Endothelial cell of umbilical vein (primary cell): ENCODE measurements at regions of chr6 and their contacts with region 1.

Region 1: GRCh38 chr6:45930420-45931040 is 85.1 kb downstream of the CLIC5 start:
- DNase-seq: peak; percentile 67
- H3K4me3 ChIP-seq: no peak overlapping the region
- H3K27ac ChIP-seq: no peak overlapping the region
- H3K4me1 ChIP-seq: no peaks in the 10 kb centered on the region
- H3K27me3 ChIP-seq: peaks cover 0 to 3% of the 10 kb centered on the region in 2 experiments
- CTCF ChIP-seq: peak; percentile 92 to 94
- POLR2A ChIP-seq: no peak

Region 2: GRCh38 chr6:45915780-45916468 is 14.6 kb before region 1 on chr6:
- CTCF ChIA-PET with region 1: interaction called, 19 read pairs
- POLR2A ChIA-PET with region 1: no interaction called
- dilution Hi-C with region 1: no loop called
- intact Hi-C with region 1: no loop called
- DNase-seq: no peak
- H3K4me3 ChIP-seq: no peak overlapping the region
- H3K27ac ChIP-seq: no peak overlapping the region
- H3K4me1 ChIP-seq: no peaks in the 10 kb centered on the region
- H3K27me3 ChIP-seq: no peaks in the 10 kb centered on the region
- CTCF ChIP-seq: no peak
- POLR2A ChIP-seq: no peak

Region 3: GRCh38 chr6:46035028-46035650 is 104.6 kb after region 1 on chr6:
- CTCF ChIA-PET with region 1: no interaction called
- POLR2A ChIA-PET with region 1: no interaction called
- dilution Hi-C with region 1: no loop called
- intact Hi-C with region 1: loop called (anchors 2 kb)
- DNase-seq: peak; percentile 46
- H3K4me3 ChIP-seq: no peak overlapping the region
- H3K27ac ChIP-seq: no peak overlapping the region
- H3K4me1 ChIP-seq: peaks cover 4% of the 10 kb centered on the region
- H3K27me3 ChIP-seq: peaks cover 0 to 4% of the 10 kb centered on the region in 2 experiments
- CTCF ChIP-seq: no peak
- POLR2A ChIP-seq: no peak

Region 4: DNA sequence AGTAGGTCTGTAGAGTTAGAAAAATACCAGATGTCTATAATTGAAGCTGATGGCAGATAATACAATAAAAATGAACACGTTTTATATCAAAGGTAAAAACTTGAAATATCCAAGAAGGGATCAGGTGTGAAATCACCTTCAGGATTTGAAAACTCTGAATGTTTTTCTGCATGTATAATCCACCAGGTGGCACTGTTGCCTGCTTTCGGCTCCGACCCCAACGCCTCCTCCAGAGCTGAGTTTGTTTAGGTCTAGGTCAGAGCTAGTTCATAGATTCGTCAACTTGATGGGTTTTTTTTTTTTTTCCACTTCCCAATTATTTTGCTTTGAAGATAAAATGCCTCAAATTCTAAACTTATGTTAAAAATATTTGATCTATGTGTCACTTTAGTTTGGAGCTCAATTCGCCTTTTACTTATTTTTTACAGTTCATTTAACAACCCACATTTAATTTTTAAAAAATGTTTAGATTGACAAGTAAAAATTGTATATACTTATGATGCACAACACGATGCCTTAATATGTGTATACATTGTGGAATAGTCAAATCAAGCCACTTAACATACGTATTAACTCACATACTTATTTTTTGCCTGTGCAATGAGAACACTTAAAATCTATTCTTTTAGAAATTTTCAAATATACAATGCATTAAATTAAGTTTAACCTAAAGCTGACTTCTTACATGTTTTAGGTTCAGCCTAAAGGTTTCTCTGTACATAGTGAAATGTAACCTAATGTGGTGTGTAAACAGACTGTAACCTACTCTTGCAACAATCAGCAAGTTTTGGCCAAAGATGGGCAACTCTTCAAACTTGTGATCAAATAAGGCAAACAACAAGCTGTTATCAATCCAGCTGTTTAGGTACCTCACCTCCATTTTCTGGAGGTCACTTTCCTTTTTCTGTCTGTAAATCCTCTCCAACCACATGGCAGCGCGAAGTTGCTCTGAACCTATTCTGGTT is 159.9 kb after region 1 on chr6:
- CTCF ChIA-PET with region 1: interaction called, 10 read pairs
- POLR2A ChIA-PET with region 1: no interaction called
- dilution Hi-C with region 1: no loop called
- intact Hi-C with region 1: loop called (anchors 1 kb)
- DNase-seq: peak; percentile 58
- H3K4me3 ChIP-seq: no peak overlapping the region
- H3K27ac ChIP-seq: no peak overlapping the region
- H3K4me1 ChIP-seq: no peaks in the 10 kb centered on the region
- H3K27me3 ChIP-seq: peaks cover 5 to 13% of the 10 kb centered on the region in 2 experiments
- CTCF ChIP-seq: peak; percentile 59 to 73
- POLR2A ChIP-seq: no peak

Region 5: GRCh38 chr6:46410334-46410953 is 479.9 kb after region 1 on chr6:
- CTCF ChIA-PET with region 1: interaction called, 85 read pairs
- POLR2A ChIA-PET with region 1: no interaction called
- dilution Hi-C with region 1: no loop called
- intact Hi-C with region 1: loop called (anchors 1 kb)
- DNase-seq: peak; percentile 50
- H3K4me3 ChIP-seq: no peak overlapping the region
- H3K27ac ChIP-seq: no peak overlapping the region
- H3K4me1 ChIP-seq: no peaks in the 10 kb centered on the region
- H3K27me3 ChIP-seq: peaks cover 0 to 9% of the 10 kb centered on the region in 2 experiments
- CTCF ChIP-seq: peak; percentile 40 to 43
- POLR2A ChIP-seq: no peak

Region 6: DNA sequence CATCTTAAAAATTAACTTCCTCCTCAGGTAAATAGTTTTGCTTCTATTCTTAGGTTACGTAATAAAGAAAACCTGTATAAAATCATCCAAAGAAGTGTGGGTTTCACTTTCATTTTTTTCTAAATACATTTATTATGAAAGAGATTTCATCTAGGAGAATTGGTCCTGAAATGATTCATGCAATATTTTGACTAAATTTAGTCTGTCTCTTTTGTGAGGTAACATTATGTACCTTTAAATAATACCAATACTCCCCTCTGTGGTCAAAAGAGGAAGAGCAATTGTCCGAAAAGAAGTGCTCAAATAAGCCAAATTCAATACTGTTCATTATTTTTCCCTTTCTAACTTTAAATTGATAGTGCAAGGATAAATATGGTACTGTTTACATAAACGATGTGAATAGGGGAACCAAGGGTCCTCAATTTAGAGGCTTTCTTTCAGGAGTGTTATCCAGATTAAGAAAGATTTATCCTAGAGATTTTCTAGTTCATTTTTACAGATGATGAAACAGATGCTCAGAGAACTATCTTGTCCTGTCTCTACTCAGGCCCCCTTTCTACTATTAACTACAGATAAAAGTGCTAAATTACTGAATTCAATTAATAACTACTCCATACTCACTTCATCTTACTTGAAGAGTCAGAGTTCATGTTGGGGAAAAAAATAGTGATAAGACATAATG is 695.8 kb after region 1 on chr6:
- CTCF ChIA-PET with region 1: no interaction called
- POLR2A ChIA-PET with region 1: no interaction called
- dilution Hi-C with region 1: no loop called
- intact Hi-C with region 1: loop called (anchors 1 kb)
- DNase-seq: peak; percentile 27
- H3K4me3 ChIP-seq: no peak overlapping the region
- H3K27ac ChIP-seq: no peak overlapping the region
- H3K4me1 ChIP-seq: no peaks in the 10 kb centered on the region
- H3K27me3 ChIP-seq: no peaks in the 10 kb centered on the region
- CTCF ChIP-seq: peak in 1 of 2 donors; percentile 16
- POLR2A ChIP-seq: no peak

Region 7: GRCh38 chr6:46781478-46782378 is 851.2 kb after region 1 on chr6:
- CTCF ChIA-PET with region 1: no interaction called
- POLR2A ChIA-PET with region 1: no interaction called
- dilution Hi-C with region 1: no loop called
- intact Hi-C with region 1: loop called (anchors 1 kb)
- DNase-seq: peak; percentile 63
- H3K4me3 ChIP-seq: no peak overlapping the region
- H3K27ac ChIP-seq: no peak overlapping the region
- H3K4me1 ChIP-seq: no peaks in the 10 kb centered on the region
- H3K27me3 ChIP-seq: peaks cover 0 to 4% of the 10 kb centered on the region in 2 experiments
- CTCF ChIP-seq: peak; percentile 50 to 60
- POLR2A ChIP-seq: no peak